ENCODE measurements at regions of chr7 and their contacts with region 1.

Region 1: GRCh38 chr7:138738551-138739335 is 37.6 kb upstream of the SVOPL start:
- DNase-seq: peak; percentile 75 to 94 (median 89)
- ATAC-seq: peak; percentile 78 to 82
- H3K4me3 ChIP-seq: no peak overlapping the region
- H3K27ac ChIP-seq: no peak overlapping the region
- H3K4me1 ChIP-seq: no peaks in the 10 kb centered on the region
- H3K27me3 ChIP-seq: no peaks in the 10 kb centered on the region

Region 2: DNA sequence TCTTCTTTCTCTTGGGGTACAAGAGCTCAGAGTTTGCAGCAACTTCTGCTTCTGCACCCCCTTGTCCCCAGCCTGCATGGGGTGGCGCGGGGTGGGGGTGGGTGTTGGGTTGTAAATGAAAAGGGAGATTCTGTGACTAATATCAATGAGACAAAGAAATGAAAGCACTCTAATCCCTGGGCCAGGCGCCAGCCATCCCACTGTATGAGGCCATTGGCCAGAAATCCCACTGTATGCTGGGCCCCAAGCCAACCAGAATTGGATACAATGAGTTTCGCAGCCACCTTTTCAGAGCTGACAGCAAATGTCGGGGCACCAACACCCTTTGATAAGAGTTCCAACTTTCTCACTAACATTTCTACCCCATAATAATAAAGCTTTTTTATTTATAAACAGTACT is 1384.3 kb before region 1 on chr7:
- intact Hi-C with region 1: no loop called
- DNase-seq: peak; percentile 29 to 75 (median 33)
- ATAC-seq: peak in 1 of 2 donors; percentile 38
- H3K4me3 ChIP-seq: no peak overlapping the region
- H3K27ac ChIP-seq: no peak overlapping the region
- H3K4me1 ChIP-seq: no peaks in the 10 kb centered on the region
- H3K27me3 ChIP-seq: no peaks in the 10 kb centered on the region

Region 3: DNA sequence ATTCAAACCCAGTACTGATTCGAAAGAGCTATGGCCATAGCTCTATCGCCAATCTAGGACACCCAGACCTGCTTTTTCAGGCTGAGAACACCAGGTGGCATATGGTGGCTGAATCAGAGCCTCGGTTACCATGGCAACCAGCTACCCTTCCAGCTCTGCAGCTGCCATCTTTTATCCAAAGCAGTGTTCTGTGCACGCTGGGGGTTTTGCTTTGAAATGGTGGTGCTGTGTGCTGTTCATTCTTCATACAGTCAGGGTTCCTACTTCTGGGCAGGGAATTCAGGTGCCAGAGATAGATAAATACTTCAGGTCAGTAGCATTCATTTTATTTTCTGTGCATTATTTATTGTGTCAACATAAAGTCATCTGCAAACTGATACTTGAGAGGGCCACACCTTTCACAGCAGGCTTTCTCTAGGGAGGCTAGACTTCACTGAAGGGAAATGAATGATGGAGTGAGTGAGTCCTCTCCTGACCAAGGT is 577.1 kb before region 1 on chr7:
- intact Hi-C with region 1: loop called in 3 of 4 experiments (anchors 5 kb)
- DNase-seq: peak; percentile 61 to 80 (median 78)
- ATAC-seq: peak; percentile 74 to 84
- H3K4me3 ChIP-seq: no peak overlapping the region
- H3K27ac ChIP-seq: no peak overlapping the region
- H3K4me1 ChIP-seq: no peaks in the 10 kb centered on the region
- H3K27me3 ChIP-seq: no peaks in the 10 kb centered on the region

Region 4: DNA sequence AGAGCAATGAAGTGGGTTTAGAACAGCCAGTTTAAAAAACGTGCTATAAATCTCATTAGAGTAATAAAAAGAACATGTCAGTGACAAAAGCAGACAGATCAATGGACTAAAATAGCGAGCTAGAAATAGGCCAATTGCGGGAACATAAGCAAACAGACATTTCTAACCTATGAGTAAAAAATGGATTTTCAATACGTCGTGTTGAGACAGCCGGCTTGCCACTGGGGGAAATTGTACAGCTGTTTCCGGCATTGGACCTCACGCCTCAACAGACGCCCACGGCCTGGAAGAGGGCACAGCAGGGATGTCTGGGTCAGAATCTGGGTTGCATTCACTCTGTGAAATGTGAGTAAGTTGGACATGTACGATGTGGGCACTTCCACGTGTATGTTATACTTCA is 130.5 kb before region 1 on chr7:
- intact Hi-C with region 1: no loop called
- DNase-seq: no peak
- ATAC-seq: no peak
- H3K4me3 ChIP-seq: no peak overlapping the region
- H3K27ac ChIP-seq: no peak overlapping the region
- H3K4me1 ChIP-seq: no peaks in the 10 kb centered on the region
- H3K27me3 ChIP-seq: no peaks in the 10 kb centered on the region

Region 5: GRCh38 chr7:138691178-138691577 is 47.6 kb before region 1 on chr7:
- intact Hi-C with region 1: no loop called
- DNase-seq: no peak
- ATAC-seq: no peak
- H3K4me3 ChIP-seq: no peak overlapping the region
- H3K27ac ChIP-seq: no peak overlapping the region
- H3K4me1 ChIP-seq: no peaks in the 10 kb centered on the region
- H3K27me3 ChIP-seq: no peaks in the 10 kb centered on the region

Measured in right cardiac atrium (tissue), 5 donors.